CD4-positive, alpha-beta memory T cell (primary cell): ENCODE measurements at regions of chr1 and their contacts with region 1.

Region 1: GRCh38 chr1:150629115-150629928 is at the start of gene ENSA:
- DNase-seq: peak; percentile 98 to 99 (median 98)
- H3K4me3 ChIP-seq: peak within 1 kb of the TSS; percentile 78 to 80
- H3K4me3 Mint-ChIP-seq: no peak within 1 kb of the TSS
- H3K27ac ChIP-seq: peak within 1 kb of the TSS; percentile 98
- H3K27ac Mint-ChIP-seq: no peak within 1 kb of the TSS
- H3K4me1 ChIP-seq: peaks cover 29% of the 10 kb centered on the region
- H3K4me1 Mint-ChIP-seq: peaks cover 18 to 21% (median 21%) of the 10 kb centered on the region in 4 donors
- H3K27me3 ChIP-seq: no peaks in the 10 kb centered on the region
- H3K27me3 Mint-ChIP-seq: no peaks in the 10 kb centered on the region
- total RNA-seq, gene ENSA: 99.7 to 101 TPM

Region 2: DNA sequence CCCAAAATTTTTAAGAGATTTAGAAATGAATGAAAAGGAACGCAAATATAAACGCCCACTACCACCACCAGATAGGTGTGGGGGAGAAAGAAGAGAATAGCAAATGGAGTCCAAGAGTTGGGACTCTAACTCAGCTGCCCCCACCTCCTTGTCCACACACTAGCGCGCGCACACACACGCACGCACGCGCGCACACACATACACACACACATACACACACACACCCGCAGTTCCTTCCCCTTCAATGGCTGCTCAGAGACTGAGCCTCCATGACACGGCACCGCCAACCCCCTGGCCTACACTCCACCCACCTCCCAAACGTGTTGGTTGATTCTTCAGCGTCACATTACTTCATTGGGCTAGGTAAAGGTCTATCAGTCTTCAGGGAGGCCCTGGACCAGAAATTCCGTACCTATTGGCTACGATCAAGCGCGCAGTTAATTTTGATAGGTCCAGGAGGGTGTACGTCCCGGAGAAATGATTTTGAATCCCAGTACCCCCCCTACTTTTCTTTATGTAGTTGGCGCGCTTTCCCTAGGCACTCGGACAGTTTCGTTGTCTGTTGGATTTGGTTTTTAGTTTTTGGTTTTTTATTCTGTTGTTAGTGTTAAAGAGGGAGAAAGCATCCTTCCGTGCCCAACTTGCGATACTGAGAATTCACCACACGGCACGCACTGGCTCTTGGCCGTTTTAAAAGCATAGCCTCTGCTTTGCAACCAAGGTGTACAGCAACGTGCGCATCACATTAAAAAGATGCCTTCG is 393.3 kb before region 1 on chr1 and contains the start of gene ANP32E:
- CTCF ChIA-PET with region 1: no interaction called
- POLR2A ChIA-PET with region 1: interaction called, 8 read pairs
- intact Hi-C with region 1: loop called (anchors 1 kb)
- DNase-seq: peak; percentile 96 to 99 (median 98)
- H3K4me3 ChIP-seq: peak within 1 kb of the TSS; percentile 76 to 100
- H3K4me3 Mint-ChIP-seq: peak within 1 kb of the TSS in 6 of 8 donors; percentile 26 to 96 (median 94)
- H3K27ac ChIP-seq: peak within 1 kb of the TSS; percentile 99
- H3K27ac Mint-ChIP-seq: peak within 1 kb of the TSS in 6 of 7 donors; percentile 96 to 100 (median 99)
- H3K4me1 ChIP-seq: peaks cover 22% of the 10 kb centered on the region
- H3K4me1 Mint-ChIP-seq: peaks cover 12 to 19% (median 16%) of the 10 kb centered on the region in 4 donors
- H3K27me3 ChIP-seq: no peaks in the 10 kb centered on the region
- H3K27me3 Mint-ChIP-seq: no peaks in the 10 kb centered on the region
- total RNA-seq, gene ANP32E: 53.4 to 57.9 TPM

Region 3: DNA sequence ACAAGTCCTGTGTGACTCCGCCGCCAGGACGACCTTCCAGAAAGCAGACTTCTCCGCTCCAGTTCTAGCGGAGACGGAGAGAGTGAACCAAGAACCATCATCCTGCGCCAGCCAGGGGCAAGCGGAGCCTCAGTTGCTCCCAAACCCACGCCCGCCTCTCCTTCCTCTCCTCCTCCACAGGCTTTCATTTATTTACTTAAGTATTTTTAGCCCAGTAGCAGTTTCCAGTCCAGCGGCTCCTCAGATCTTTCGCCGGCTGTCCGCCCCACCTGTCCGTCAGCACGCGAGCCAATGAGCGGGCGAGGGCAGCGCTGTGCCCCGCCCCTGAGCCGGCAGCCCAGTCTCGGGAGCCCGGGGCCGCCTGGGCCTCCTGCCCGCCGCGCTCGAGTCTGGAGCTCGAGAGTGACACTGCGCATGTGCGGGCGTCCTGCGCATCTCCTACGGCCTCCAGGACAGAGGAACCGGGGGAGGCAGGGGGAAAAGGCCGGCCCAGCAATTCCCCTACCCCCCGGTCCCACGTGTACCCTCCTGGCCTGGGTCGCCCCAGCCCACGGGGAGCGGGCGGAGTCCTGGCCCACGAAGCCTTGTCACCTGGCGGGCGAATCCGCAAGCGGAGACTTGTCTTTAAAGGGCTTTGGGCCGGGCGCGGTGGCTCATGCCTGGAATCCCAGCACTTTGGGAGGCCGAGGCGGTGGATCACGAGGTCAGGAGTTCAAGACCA is 113.8 kb before region 1 on chr1 and contains the start of gene FALEC:
- CTCF ChIA-PET with region 1: no interaction called
- POLR2A ChIA-PET with region 1: interaction called, 11 read pairs
- intact Hi-C with region 1: no loop called
- DNase-seq: peak; percentile 87 to 91 (median 89)
- H3K4me3 ChIP-seq: peak within 1 kb of the TSS; percentile 69 to 73
- H3K4me3 Mint-ChIP-seq: peak within 1 kb of the TSS; percentile 83 to 94 (median 92)
- H3K27ac ChIP-seq: peak within 1 kb of the TSS; percentile 53
- H3K27ac Mint-ChIP-seq: peak within 1 kb of the TSS; percentile 61 to 93 (median 89)
- H3K4me1 ChIP-seq: peaks cover 11% of the 10 kb centered on the region
- H3K4me1 Mint-ChIP-seq: peaks cover 8 to 20% (median 12%) of the 10 kb centered on the region in 4 donors
- H3K27me3 ChIP-seq: no peaks in the 10 kb centered on the region
- H3K27me3 Mint-ChIP-seq: no peaks in the 10 kb centered on the region
- total RNA-seq, gene FALEC: 0.64 TPM in 1 of 2 experiments, not detected in the other

Region 4: DNA sequence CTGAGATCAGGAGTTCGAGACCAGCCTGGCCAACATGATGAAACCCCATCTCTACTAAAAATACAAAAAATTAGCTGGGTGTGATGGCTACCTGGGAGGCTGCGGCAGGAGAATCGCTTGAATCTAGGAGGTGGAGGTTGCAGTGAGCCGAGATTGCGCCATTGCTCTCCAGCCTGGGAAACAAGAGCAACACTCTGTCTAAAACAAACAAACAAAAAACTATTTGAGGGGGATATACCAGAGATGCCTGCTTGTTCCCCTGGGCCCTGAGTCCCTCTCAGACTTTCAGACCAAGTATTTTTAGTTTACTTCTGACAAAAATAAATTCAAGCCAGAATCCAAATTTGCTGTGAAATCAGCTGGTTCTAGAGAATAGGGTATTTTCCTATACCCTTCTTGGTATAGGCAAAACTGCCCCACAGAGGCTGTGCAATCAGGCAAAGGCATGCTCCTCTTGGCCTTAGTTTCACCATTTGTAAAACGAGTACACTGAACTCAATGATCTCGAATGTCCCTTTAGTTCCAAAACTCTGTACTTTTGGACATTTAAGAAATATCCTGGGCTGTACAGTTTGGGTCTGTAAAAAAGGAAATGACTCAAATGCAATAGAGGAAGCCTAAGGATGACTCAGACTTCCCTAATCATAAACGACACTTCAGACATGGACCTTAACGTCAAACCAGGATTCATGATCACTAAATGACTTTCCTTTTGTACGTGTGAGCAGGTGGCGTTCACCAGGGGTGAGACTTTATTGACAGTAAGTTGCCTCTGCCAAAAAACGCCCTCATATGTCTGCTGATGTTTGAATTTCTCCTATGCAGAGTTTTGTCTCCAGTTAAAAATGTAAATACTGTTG is 16.0 kb before region 1 on chr1:
- CTCF ChIA-PET with region 1: interaction called, 4 read pairs
- POLR2A ChIA-PET with region 1: interaction called, 35 read pairs
- intact Hi-C with region 1: loop called (anchors 1 kb)
- DNase-seq: peak; percentile 41 to 83 (median 51)
- H3K4me3 ChIP-seq: no peak overlapping the region
- H3K4me3 Mint-ChIP-seq: peak overlapping the region; percentile 27 to 78 (median 58)
- H3K27ac ChIP-seq: peak overlapping the region; percentile 94
- H3K27ac Mint-ChIP-seq: peak overlapping the region; percentile 89 to 100 (median 99)
- H3K4me1 ChIP-seq: peaks cover 63% of the 10 kb centered on the region
- H3K4me1 Mint-ChIP-seq: peaks cover 44 to 70% (median 54%) of the 10 kb centered on the region in 4 donors
- H3K27me3 ChIP-seq: no peaks in the 10 kb centered on the region
- H3K27me3 Mint-ChIP-seq: no peaks in the 10 kb centered on the region

Region 5: GRCh38 chr1:150979092-150980056 is 350.1 kb after region 1 on chr1:
- CTCF ChIA-PET with region 1: no interaction called
- POLR2A ChIA-PET with region 1: interaction called, 10 read pairs
- intact Hi-C with region 1: no loop called
- DNase-seq: peak; percentile 83 to 87 (median 85)
- H3K4me3 ChIP-seq: peak overlapping the region in 1 of 2 donors; percentile 52
- H3K4me3 Mint-ChIP-seq: peak overlapping the region in 4 of 8 donors; percentile 29 to 59 (median 41)
- H3K27ac ChIP-seq: peak overlapping the region; percentile 11
- H3K27ac Mint-ChIP-seq: peak overlapping the region in 6 of 7 donors; percentile 48 to 83 (median 64)
- H3K4me1 ChIP-seq: peaks cover 39% of the 10 kb centered on the region
- H3K4me1 Mint-ChIP-seq: peaks cover 20 to 44% (median 31%) of the 10 kb centered on the region in 4 donors
- H3K27me3 ChIP-seq: no peaks in the 10 kb centered on the region
- H3K27me3 Mint-ChIP-seq: no peaks in the 10 kb centered on the region